Activated CD4-positive, alpha-beta T cell treated with anti-CD3 and anti-CD28 coated beads for 36 hours (primary cell): ENCODE measurements at regions of chr1 and their contacts with region 1.

Region 1: GRCh38 chr1:209627732-209628196 is 24.5 kb downstream of the LAMB3 start:
- DNase-seq: peak; percentile 89
- ATAC-seq: peak; percentile 91
- H3K4me3 Mint-ChIP-seq: no peak overlapping the region
- H3K27ac Mint-ChIP-seq: no peak overlapping the region
- H3K4me1 Mint-ChIP-seq: peaks cover 8% of the 10 kb centered on the region
- H3K27me3 Mint-ChIP-seq: no peaks in the 10 kb centered on the region

Region 2: GRCh38 chr1:209302779-209303568 is 324.8 kb before region 1 on chr1:
- CTCF ChIA-PET with region 1: no interaction called
- POLR2A ChIA-PET with region 1: no interaction called
- intact Hi-C with region 1: no loop called
- DNase-seq: no peak
- ATAC-seq: no peak
- H3K4me3 Mint-ChIP-seq: no peak overlapping the region
- H3K27ac Mint-ChIP-seq: no peak overlapping the region
- H3K4me1 Mint-ChIP-seq: no peaks in the 10 kb centered on the region
- H3K27me3 Mint-ChIP-seq: peaks cover 9% of the 10 kb centered on the region

Region 3: DNA sequence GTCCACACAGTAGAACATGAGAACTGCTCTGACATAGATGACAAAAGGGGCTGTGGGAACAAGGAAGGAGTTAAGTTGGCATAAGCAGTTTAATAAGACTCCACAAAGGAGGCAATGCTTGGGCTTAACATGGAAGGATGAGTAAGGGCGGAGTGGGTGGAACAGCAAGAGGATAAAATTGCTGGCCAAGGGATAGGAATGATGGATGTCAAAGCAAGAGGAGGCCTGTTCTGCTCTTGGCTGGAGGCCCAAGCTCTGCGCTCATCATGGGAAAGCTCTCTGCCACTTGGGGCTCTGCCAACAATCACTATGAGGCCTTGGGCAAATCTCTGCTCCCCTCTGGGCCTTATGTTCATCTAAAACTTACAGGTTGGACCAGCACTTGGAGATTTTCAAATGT is 142.6 kb before region 1 on chr1:
- CTCF ChIA-PET with region 1: no interaction called
- POLR2A ChIA-PET with region 1: no interaction called
- intact Hi-C with region 1: no loop called
- DNase-seq: no peak
- ATAC-seq: no peak
- H3K4me3 Mint-ChIP-seq: no peak overlapping the region
- H3K27ac Mint-ChIP-seq: no peak overlapping the region
- H3K4me1 Mint-ChIP-seq: peaks cover 11% of the 10 kb centered on the region
- H3K27me3 Mint-ChIP-seq: peaks cover 3% of the 10 kb centered on the region

Region 4: DNA sequence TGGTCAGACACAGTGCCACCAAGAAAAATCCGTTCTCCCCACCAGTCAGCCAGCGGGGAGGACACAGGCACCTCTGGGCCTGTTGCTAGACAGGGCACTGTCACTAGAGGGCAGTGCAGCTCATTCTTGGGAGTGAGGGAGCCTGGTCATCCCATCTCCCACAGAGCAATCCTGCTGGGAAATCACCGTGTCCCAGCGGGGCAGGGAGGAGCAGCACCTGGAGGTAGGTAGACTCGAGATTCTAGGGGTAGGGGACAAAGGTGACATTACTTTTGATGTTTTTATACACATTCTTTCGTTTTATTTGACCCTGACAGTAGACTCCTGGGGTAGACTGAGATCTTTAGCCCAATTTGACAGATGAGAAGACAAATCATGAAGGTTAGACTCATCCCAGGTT is 51.0 kb before region 1 on chr1:
- CTCF ChIA-PET with region 1: interaction called, 19 read pairs
- POLR2A ChIA-PET with region 1: no interaction called
- intact Hi-C with region 1: loop called (anchors 1 kb)
- DNase-seq: peak; percentile 84
- ATAC-seq: peak; percentile 98
- H3K4me3 Mint-ChIP-seq: no peak overlapping the region
- H3K27ac Mint-ChIP-seq: no peak overlapping the region
- H3K4me1 Mint-ChIP-seq: no peaks in the 10 kb centered on the region
- H3K27me3 Mint-ChIP-seq: peaks cover 7% of the 10 kb centered on the region

Region 5: GRCh38 chr1:209590405-209590804 is 37.4 kb before region 1 on chr1:
- CTCF ChIA-PET with region 1: interaction called, 13 read pairs
- POLR2A ChIA-PET with region 1: no interaction called
- intact Hi-C with region 1: no loop called
- DNase-seq: no peak
- ATAC-seq: no peak
- H3K4me3 Mint-ChIP-seq: no peak overlapping the region
- H3K27ac Mint-ChIP-seq: no peak overlapping the region
- H3K4me1 Mint-ChIP-seq: no peaks in the 10 kb centered on the region
- H3K27me3 Mint-ChIP-seq: peaks cover 14% of the 10 kb centered on the region

Region 6: GRCh38 chr1:209601809-209602657 is 25.7 kb before region 1 on chr1:
- CTCF ChIA-PET with region 1: interaction called, 14 read pairs
- POLR2A ChIA-PET with region 1: no interaction called
- intact Hi-C with region 1: loop called (anchors 1 kb)
- DNase-seq: peak; percentile 63
- ATAC-seq: peak; percentile 94
- H3K4me3 Mint-ChIP-seq: no peak overlapping the region
- H3K27ac Mint-ChIP-seq: no peak overlapping the region
- H3K4me1 Mint-ChIP-seq: peaks cover 3% of the 10 kb centered on the region
- H3K27me3 Mint-ChIP-seq: peaks cover 9% of the 10 kb centered on the region